Ovary (tissue), 10 donors: ENCODE measurements at regions of chr3 and their contacts with region 1.

Region 1: GRCh38 chr3:54433846-54434245 is 311.5 kb downstream of the CACNA2D3 start:
- DNase-seq: no peak
- H3K4me3 ChIP-seq: no peak overlapping the region
- H3K27ac ChIP-seq: no peak overlapping the region
- H3K4me1 ChIP-seq: no peaks in the 10 kb centered on the region
- H3K27me3 ChIP-seq: no peaks in the 10 kb centered on the region
- CTCF ChIP-seq: no peak
- EP300 ChIP-seq: no peak
- POLR2A ChIP-seq: no peak

Region 2: DNA sequence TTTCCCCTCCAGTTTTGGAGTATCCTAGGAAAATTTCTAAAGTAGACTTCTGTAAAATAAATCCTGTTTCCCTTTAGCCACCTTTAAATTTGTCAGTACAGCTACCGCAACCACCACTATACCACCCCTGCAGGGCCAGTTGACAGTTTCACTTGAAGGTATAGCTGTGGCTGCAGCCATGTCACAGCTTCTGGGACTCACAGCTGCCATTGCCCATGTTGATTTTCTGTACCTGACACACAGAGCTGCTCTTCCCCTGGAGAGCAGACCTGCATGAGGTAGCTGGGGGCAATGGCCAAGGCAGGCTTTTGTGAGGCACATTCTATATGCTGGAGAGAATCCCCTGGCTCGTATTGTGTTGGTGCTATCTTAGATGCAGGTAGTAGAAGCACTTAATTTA is 148.6 kb after region 1 on chr3:
- intact Hi-C with region 1: no loop called
- DNase-seq: no peak
- H3K4me3 ChIP-seq: no peak overlapping the region
- H3K27ac ChIP-seq: no peak overlapping the region
- H3K4me1 ChIP-seq: no peaks in the 10 kb centered on the region
- H3K27me3 ChIP-seq: no peaks in the 10 kb centered on the region
- CTCF ChIP-seq: no peak
- EP300 ChIP-seq: no peak
- POLR2A ChIP-seq: no peak

Region 3: DNA sequence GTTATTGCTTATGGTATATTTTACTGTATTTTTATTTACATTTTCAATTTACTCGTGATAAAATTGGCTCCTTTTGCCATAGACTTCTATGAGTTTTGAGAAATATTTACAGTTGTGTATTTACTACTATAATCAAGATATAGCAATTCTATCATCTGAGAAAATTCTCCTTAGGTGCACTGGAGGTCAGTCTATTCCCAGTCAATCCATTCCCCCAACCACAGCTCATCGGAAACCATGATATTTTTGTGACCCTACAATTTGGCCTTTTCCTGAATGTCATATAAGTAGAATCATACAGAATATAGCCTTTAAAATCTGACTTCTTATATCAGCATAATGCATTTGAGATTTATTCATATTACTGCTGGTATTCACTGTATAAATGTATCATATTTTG is 608.7 kb after region 1 on chr3:
- intact Hi-C with region 1: no loop called
- DNase-seq: no peak
- H3K4me3 ChIP-seq: no peak overlapping the region
- H3K27ac ChIP-seq: no peak overlapping the region
- H3K4me1 ChIP-seq: no peaks in the 10 kb centered on the region
- H3K27me3 ChIP-seq: no peaks in the 10 kb centered on the region
- CTCF ChIP-seq: no peak
- EP300 ChIP-seq: no peak
- POLR2A ChIP-seq: no peak

Region 4: DNA sequence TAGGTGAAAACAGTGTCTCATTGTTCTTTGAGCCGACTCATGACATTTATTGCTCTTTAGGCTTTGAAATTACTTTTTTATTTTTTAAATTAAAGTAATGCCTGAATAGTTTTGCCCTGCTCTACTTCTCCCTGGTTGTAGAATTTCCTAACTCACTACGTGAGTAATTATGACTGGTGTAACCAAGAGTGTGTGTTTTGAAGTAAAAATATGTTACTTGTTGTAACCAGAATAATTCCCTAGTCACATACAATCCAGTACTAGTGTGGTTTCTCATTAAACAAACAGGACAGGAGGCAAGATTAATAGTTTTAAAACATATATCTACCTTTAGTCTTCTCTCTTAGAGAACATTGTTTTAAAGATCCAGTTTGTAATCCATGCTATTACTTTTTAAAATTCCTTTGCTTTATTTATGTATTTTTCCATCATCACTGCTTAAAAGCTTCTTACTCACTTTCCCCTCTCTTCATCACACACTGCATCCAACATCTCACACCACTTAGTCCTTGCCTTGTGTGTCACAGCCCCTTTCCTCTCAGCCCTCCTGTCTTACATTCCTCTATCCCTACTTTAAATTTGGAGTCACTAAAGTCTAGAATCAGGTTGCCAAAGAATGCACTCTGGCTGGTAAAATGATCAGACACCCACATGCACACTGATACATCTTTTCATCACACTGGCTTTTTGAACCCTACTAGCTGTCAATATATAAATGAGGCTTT is 833.5 kb after region 1 on chr3:
- intact Hi-C with region 1: loop called in 1 of 4 experiments (anchors 10 kb)
- DNase-seq: no peak
- H3K4me3 ChIP-seq: no peak overlapping the region
- H3K27ac ChIP-seq: no peak overlapping the region
- H3K4me1 ChIP-seq: peaks cover 4% of the 10 kb centered on the region
- H3K27me3 ChIP-seq: no peaks in the 10 kb centered on the region
- CTCF ChIP-seq: no peak
- EP300 ChIP-seq: no peak
- POLR2A ChIP-seq: no peak